ENCODE measurements at regions of chr15 and their contacts with region 1.

Region 1: GRCh38 chr15:77059786-77060361 is 11.0 kb downstream of the TSPAN3 start:
- DNase-seq: no peak
- ATAC-seq: peak; percentile 43
- H3K4me3 Mint-ChIP-seq: no peak overlapping the region
- H3K27ac Mint-ChIP-seq: no peak overlapping the region
- H3K4me1 Mint-ChIP-seq: peaks cover 52% of the 10 kb centered on the region
- H3K27me3 Mint-ChIP-seq: no peaks in the 10 kb centered on the region

Region 2: DNA sequence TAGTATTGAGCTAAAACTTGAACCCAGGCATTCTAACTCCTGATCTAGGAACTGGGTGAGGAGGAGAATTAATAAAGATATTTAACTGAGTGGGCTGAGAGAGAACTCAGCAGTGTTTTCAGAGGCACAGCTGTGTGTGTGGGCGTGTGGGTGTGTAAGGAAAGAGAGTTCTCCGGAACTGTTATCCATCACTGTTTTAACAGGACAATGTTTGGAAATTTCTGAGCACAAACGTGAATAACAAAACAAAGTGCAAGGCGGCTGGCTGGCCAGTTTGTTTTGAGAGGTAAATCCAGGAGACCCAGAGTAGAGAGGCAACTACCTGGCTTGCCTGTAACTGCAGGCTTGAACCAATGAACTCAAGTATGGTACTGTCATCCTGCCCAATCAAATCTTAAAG is 1475.8 kb before region 1 on chr15:
- CTCF ChIA-PET with region 1: no interaction called
- POLR2A ChIA-PET with region 1: no interaction called
- intact Hi-C with region 1: no loop called
- DNase-seq: no peak
- ATAC-seq: no peak
- H3K4me3 Mint-ChIP-seq: no peak overlapping the region
- H3K27ac Mint-ChIP-seq: no peak overlapping the region
- H3K4me1 Mint-ChIP-seq: peaks cover 8% of the 10 kb centered on the region
- H3K27me3 Mint-ChIP-seq: no peaks in the 10 kb centered on the region

Region 3: GRCh38 chr15:76871930-76872329 is 187.9 kb before region 1 on chr15:
- CTCF ChIA-PET with region 1: no interaction called
- POLR2A ChIA-PET with region 1: interaction called, 15 read pairs
- intact Hi-C with region 1: no loop called
- DNase-seq: no peak
- ATAC-seq: no peak
- H3K4me3 Mint-ChIP-seq: peak overlapping the region; percentile 38
- H3K27ac Mint-ChIP-seq: peak overlapping the region; percentile 43
- H3K4me1 Mint-ChIP-seq: peaks cover 7% of the 10 kb centered on the region
- H3K27me3 Mint-ChIP-seq: no peaks in the 10 kb centered on the region